Cardiac septum (tissue), 1 donor: ENCODE measurements at regions of chr2 and their contacts with region 1.

Region 1: GRCh38 chr2:158456309-158457066 is at the starts of genes CCDC148 and PKP4:
- DNase-seq: peak; percentile 95
- total RNA-seq, gene CCDC148: 0.30 TPM
- total RNA-seq, gene PKP4: 43.2 TPM

Region 2: DNA sequence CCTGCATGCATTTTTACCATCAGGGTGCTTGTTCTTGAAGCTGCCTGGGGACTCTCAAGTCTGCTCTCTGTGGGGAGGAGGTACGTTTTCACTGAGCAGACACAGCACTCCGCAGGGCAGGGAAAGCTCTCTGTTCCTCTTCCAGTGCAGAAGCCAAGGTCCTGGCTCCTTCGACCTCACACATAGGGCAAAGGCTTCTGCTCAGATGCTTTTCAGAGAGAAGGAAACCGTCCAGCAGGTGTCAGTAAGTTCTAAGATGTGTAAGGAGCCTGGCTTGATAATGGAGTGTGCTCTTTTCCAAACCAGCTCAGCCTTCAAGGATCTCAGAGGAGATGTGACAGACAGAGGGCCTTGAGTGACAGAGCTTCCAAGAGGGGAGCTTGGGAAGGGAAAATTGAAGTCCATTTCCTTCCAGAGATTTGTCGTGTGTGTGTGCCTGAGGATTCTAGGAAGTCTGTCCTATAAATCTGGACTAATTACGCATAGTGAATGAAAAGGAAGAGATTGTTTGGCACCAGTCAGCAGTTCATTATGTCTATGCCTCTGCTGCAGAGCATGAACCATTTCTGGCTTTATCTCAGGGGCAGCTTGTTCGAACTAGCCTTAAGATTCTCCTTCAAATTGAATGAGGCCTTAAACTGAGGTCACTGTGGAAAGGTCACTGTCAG is 422.2 kb before region 1 on chr2:
- intact Hi-C with region 1: loop called (anchors 2 kb)
- DNase-seq: no peak

Region 3: DNA sequence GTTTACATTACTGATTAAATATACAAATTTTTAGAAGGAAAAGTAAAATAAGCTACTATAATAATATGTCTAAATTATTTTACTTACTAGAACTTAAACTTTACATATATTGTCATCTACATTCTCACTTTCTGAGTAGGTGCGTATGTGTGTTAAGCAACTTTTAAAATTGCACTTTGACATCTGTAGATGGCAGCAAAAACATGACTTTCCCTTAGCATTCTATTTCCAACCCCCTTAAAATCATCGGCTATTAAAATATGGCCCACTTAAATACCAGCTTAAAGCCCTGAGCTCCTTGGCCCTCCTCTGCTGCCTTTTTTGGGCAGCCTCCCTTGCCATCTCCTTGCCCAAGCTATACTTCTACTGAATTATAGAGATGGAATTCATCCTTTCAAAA is 276.8 kb before region 1 on chr2:
- intact Hi-C with region 1: loop called (anchors 10 kb)
- DNase-seq: no peak

Region 4: DNA sequence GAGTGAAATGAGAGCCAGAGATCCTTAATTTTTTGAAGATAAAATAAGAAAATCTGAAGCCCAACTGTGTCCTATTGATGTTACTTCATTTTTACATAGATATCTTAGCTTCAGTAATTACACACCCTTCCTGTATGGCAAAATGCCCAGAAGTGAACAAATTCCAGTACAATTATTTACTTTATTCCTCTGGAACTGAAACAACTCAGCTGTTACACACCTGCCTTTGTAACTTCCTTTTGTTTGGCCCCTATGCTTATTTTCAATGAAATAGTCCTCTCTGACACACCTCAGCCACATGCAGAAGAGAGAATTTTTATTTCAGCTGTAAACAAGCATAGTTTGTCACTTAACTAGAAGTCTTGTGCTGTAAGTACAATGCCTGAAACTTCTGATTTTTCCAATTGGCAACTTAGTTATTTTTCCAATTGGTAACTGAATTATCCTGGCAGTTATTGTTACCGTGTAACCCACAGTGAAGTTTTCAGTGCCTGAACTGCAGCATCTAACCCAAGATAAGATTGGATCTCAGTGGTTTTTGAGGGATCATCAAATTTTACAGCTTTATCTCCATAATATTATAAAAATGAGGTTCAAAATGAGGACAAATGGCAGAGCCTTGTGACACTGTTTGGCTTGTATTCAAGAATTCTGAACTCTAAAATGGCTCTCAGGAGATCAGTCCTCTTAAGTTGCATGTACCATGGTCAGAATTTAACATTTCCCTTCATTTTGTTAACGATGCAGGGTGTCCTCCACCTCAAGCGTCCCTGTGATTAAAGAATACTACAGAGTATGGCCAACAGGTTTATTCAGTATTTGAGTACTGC is 82.9 kb after region 1 on chr2:
- intact Hi-C with region 1: loop called (anchors 5 kb)
- DNase-seq: no peak

Region 5: DNA sequence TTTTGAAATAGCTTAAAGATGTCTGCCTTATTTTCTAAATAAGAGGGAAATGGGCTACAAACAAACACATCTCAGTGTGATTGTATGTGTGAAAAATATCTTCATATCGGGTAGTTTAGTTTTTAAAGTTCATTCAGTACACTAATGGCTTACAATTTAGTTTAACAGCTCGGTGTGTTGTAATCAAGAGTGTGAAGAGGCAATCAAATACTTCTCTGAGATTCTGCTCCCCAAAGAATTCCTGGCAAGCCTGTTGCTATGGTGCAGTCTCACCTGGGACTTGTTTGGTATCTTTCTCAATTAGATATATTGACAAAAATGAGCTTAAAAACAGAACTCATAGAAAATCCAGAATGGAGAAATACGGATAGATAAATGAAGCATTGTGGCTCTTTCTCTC is 99.6 kb after region 1 on chr2:
- intact Hi-C with region 1: no loop called
- DNase-seq: no peak

Region 6: GRCh38 chr2:158667586-158667985 is 211.1 kb after region 1 on chr2:
- intact Hi-C with region 1: loop called (anchors 10 kb)
- DNase-seq: no peak

Region 7: DNA sequence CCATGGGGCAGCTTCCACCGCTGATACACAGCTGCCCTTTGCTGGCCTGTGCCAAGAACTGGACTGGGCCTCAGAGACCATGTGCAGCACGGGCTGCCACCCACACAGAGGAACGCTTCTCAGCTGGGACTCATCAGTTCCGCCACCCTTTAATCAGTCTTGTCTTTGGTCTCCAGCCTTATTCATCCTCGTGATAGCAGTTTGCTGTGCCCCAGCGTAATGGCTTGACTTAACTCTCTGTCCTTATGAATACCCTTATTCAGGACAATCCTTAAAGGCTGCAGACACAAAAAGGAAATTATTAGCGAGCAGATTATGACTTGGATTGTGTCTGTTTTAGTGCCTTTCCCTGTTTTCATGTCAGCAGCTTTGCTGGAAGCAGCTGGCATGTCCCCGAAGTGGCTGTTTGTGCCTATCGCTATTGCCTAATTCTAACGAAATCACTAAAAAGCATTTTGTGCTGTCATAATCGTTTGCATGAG is 229.8 kb after region 1 on chr2:
- intact Hi-C with region 1: loop called (anchors 5 kb)
- DNase-seq: peak; percentile 80

Region 8: DNA sequence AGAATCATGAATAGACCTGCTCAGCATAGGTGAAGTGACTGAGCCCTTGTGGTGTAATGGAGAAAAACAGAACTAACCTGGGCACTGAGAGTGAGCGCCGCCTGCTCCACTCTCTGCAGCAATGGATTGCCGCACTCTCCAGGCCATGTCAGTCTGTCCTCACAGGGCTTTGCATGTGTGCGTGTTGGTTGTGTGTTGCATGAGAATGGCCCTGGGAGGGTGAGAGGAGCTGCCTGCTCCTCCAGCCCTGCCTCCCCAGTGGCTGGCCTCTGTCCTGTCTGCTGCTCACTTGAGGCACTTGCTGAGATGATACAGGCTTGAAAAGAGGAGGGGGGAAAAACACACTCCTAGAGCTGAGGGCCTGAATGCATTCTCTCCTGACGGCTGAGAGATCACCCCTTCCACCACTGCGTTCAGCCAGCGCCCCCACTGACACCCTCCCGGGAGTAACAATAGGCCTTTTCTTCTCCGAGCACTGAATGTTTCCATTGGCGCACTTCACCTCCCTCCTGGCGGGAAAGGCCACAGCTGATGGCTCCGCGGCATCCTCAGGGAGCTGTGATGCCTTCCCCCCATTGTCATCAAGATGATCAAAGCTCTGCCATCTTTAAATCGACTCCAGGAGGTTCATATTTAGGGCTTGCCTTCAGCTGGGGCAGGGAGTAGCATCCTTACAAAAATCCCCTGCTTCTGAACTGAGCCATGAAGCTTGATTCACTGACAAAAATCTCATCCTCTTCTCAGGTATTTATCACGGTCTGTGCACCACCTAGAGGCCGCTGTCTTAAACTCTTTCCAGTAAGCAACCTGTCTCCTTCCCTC is 288.8 kb after region 1 on chr2:
- intact Hi-C with region 1: loop called (anchors 2 kb)
- DNase-seq: no peak